Activated CD4-positive, alpha-beta memory T cell treated with anti-CD3 and anti-CD28 coated beads for 36 hours (primary cell): ENCODE measurements at regions of chr6 and their contacts with region 1.

Region 1: GRCh38 chr6:53294095-53294494 is 54.7 kb downstream of the ELOVL5 start:
- DNase-seq: no peak
- H3K4me3 Mint-ChIP-seq: no peak overlapping the region
- H3K27ac Mint-ChIP-seq: no peak overlapping the region
- H3K4me1 Mint-ChIP-seq: peaks cover 77% of the 10 kb centered on the region
- H3K27me3 Mint-ChIP-seq: no peaks in the 10 kb centered on the region

Region 2: DNA sequence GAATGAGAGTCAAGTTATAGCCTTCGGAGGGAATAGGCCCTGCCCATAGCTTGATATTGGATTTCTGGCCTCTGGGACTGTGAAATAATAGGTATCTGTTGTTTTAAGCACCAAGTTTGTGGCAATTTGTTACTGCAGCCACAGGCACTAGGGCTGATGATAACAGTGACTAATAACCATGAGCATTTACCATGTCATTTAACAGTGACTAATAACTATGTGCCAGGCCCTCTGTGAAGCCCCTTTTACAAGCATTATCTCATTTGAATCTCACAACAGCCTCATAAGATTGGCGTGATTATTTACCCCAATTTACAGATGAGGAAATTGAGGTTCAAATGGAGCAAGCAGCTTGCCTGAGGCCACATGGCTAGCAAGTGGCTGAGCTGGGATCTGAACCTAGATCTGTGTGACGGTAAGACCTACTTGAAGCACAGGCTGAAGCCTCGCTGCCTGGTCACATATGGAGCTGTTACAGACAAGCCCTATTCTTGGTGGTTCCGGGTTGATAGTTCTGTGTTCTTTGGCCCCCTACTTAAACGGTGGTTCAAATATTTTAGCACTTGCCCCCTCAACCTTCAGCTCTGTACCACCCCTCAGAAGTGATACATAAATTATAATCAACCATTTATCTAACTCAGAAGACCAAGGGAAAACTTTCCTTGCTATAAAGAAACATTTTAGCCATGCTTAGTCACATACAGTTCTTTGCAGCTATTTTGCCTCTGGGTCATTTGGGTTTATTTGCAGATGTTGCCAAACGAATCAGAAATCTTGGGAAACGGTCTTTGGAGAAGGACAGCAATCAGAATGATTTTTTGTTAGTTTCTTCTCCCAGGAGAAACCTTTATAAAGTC is 43.7 kb before region 1 on chr6:
- CTCF ChIA-PET with region 1: no interaction called
- POLR2A ChIA-PET with region 1: no interaction called
- intact Hi-C with region 1: no loop called
- DNase-seq: no peak
- H3K4me3 Mint-ChIP-seq: no peak overlapping the region
- H3K27ac Mint-ChIP-seq: no peak overlapping the region
- H3K4me1 Mint-ChIP-seq: peaks cover 5% of the 10 kb centered on the region
- H3K27me3 Mint-ChIP-seq: no peaks in the 10 kb centered on the region

Region 3: GRCh38 chr6:53322188-53323029 is 28.3 kb after region 1 on chr6:
- CTCF ChIA-PET with region 1: no interaction called
- POLR2A ChIA-PET with region 1: no interaction called
- intact Hi-C with region 1: loop called (anchors 1 kb)
- DNase-seq: no peak
- H3K4me3 Mint-ChIP-seq: no peak overlapping the region
- H3K27ac Mint-ChIP-seq: peak overlapping the region; percentile 60
- H3K4me1 Mint-ChIP-seq: peaks cover 65% of the 10 kb centered on the region
- H3K27me3 Mint-ChIP-seq: no peaks in the 10 kb centered on the region